ENCODE measurements at regions of chr18 and their contacts with region 1.

Region 1: DNA sequence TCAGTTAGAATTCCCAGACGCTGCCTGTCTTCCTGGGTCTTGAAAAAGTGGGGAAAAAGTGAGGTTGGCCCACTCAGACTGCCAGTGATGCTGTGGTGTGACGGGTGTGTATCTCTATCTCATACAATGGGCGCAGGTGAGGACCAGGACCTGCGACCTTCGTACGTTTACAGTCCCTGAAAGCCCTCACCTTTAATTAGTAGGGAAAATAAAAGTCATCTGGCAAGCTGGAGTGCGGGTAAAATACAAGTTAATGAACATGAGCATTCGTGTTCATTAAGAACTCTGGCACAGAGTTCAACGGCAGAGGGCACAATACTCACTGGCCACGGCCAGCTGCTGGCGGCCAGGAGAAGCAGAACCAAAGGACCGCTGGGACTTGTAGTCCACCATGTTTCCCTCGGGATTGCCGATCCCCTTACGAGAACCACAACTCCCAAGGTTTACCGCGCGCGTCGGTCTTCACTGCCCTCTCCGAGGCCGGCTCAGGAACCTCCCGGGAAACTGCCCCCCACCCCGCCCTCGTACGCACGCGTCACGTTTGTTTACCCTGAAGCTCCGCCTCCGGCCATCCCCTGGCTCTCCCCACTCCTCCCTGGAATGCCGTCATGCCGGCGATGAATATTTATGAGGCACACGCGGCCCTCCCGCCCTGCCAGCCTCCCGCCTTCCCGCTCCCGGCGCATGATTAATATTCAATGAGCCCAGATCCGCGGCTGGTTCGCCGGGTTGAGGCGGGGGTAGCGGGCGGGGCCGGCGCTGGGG is 488 bp upstream of the PHLPP1 start:
- DNase-seq: peak; percentile 100
- H3K4me3 ChIP-seq: peak overlapping the region in 3 of 4 donors; percentile 72 to 88 (median 81)
- H3K27ac ChIP-seq: peak overlapping the region; percentile 92 to 98 (median 95)
- H3K4me1 ChIP-seq: peaks cover 0 to 37% (median 32%) of the 10 kb centered on the region in 4 donors
- H3K27me3 ChIP-seq: no peaks in the 10 kb centered on the region
- CTCF ChIP-seq: peak; percentile 65 to 78 (median 70)
- EP300 ChIP-seq: peak; percentile 17 to 71 (median 51)
- POLR2A ChIP-seq: no peak

Region 2: DNA sequence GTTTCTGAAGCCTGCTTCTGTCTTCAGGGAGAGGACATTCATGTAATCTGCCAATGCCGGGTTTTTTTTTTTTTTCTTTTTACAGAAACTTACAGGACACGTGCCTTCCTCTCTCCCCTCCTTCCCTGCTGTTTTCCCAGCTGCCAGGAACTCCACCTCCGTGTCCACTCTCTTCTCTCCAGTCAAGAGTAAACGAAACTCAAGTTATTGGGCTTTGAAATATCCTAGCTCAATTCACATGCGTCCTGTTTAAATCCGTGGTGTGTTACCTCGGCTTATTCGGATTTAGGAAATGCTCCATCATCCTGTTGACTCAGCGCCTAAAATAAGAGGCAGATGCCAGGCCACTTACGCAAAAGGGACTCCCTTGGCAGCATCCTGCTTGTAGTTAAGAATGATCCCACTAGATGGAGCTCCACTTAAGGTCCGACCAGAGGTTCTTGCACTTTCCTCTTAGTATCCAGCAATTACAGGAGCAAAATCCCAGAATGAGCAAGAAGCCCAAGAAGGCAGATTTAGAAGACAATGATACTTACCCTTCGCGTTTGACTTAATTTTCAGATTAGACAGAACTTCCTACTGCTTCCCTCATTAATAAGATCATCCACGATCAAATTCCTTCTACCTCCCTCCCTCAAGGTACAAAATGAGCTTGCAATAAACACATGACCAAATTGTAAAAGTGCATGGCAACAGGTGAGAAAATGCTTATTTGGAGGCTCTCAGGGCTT is 289.2 kb before region 1 on chr18:
- intact Hi-C with region 1: loop called (anchors 2 kb)
- DNase-seq: peak; percentile 94
- H3K4me3 ChIP-seq: peak overlapping the region; percentile 4 to 47 (median 38)
- H3K27ac ChIP-seq: peak overlapping the region; percentile 79 to 85 (median 83)
- H3K4me1 ChIP-seq: peaks cover 0 to 13% (median 12%) of the 10 kb centered on the region in 4 donors
- H3K27me3 ChIP-seq: no peaks in the 10 kb centered on the region
- CTCF ChIP-seq: peak; percentile 58 to 80 (median 77)
- EP300 ChIP-seq: no peak
- POLR2A ChIP-seq: no peak

Region 3: DNA sequence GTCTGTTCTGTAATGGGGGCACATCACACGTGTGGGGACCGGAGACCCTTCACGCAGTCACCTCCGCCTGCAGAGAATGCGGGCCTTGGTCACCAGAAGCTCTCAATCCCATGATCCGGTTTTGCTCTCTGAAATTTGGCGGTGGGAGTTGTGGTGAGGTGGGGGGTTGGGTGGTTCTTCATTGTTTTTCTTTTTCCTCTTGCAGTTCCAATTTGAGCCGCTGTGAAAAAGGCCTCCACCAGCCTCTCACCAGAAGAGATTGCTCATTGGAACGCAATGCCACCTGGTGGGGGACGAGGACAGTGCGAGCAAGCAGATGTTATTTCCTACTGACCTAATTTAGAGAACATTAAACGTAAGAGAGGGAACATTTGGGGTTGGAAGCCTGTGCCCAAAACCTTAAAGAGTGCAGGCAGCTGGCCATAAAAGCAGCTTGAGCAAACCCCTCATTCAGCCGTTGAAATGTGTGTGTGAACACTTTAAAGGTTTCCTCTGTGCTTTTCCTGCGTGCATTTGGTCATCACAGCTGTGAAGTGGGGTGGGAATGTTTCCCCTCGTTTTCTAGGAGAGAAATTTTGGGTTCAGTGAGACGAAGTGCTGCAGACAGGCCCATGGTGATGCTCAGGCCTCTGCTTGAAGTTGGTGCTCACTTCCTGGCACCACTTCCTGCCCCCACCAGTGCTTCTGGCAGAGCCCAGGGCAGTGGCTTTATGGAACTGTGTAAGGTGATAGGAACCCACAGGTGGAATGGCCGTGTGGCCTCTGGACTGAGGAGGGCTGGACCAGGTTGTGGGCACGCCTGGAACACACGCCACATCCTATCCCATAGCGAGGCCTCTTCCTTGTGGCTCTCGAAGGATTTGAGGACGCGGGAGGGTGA is 130.4 kb before region 1 on chr18:
- intact Hi-C with region 1: loop called (anchors 5 kb)
- DNase-seq: peak; percentile 94
- H3K4me3 ChIP-seq: peak overlapping the region in 3 of 4 donors; percentile 15 to 24 (median 16)
- H3K27ac ChIP-seq: peak overlapping the region; percentile 10 to 66 (median 42)
- H3K4me1 ChIP-seq: peaks cover 0 to 21% (median 12%) of the 10 kb centered on the region in 4 donors
- H3K27me3 ChIP-seq: no peaks in the 10 kb centered on the region
- CTCF ChIP-seq: peak; percentile 98 to 99 (median 98)
- EP300 ChIP-seq: no peak
- POLR2A ChIP-seq: no peak

Region 4: GRCh38 chr18:62982600-62983251 is 267.9 kb after region 1 on chr18:
- intact Hi-C with region 1: loop called (anchors 1 kb)
- DNase-seq: peak; percentile 79
- H3K4me3 ChIP-seq: peak overlapping the region in 3 of 4 donors; percentile 21 to 43 (median 42)
- H3K27ac ChIP-seq: no peak overlapping the region
- H3K4me1 ChIP-seq: peaks cover 0 to 8% (median 6%) of the 10 kb centered on the region in 4 donors
- H3K27me3 ChIP-seq: no peaks in the 10 kb centered on the region
- CTCF ChIP-seq: peak; percentile 67 to 75 (median 70)
- EP300 ChIP-seq: no peak
- POLR2A ChIP-seq: no peak

Region 5: GRCh38 chr18:63969960-63970802 is 1255.3 kb after region 1 on chr18 and contains the start of gene SERPINB8:
- intact Hi-C with region 1: loop called (anchors 10 kb)
- DNase-seq: peak; percentile 97
- H3K4me3 ChIP-seq: peak within 1 kb of the TSS; percentile 65 to 97 (median 90)
- H3K27ac ChIP-seq: peak within 1 kb of the TSS; percentile 95 to 99 (median 98)
- H3K4me1 ChIP-seq: peaks cover 0 to 12% (median 8%) of the 10 kb centered on the region in 4 donors
- H3K27me3 ChIP-seq: no peaks in the 10 kb centered on the region
- CTCF ChIP-seq: no peak
- EP300 ChIP-seq: no peak
- POLR2A ChIP-seq: peak; percentile 83 to 87
- total RNA-seq, gene SERPINB8: 2.2 to 7.1 (median 5.0) TPM

Measured in sigmoid colon (tissue), 7 donors.